ENCODE measurements at regions of chr15 and their contacts with region 1.

Region 1: GRCh38 chr15:49620658-49621368 is at the starts of genes DTWD1 and FAM227B:
- DNase-seq: peak; percentile 86 to 98
- H3K4me3 ChIP-seq: peak within 1 kb of the TSS; percentile 59 to 76
- H3K27ac ChIP-seq: peak within 1 kb of the TSS; percentile 84 to 90
- H3K4me1 ChIP-seq: peaks cover 0 to 11% of the 10 kb centered on the region in 2 donors
- H3K27me3 ChIP-seq: no peaks in the 10 kb centered on the region
- CTCF ChIP-seq: no peak
- total RNA-seq, gene DTWD1: 18.4 TPM
- total RNA-seq, gene FAM227B: not detected

Region 2: DNA sequence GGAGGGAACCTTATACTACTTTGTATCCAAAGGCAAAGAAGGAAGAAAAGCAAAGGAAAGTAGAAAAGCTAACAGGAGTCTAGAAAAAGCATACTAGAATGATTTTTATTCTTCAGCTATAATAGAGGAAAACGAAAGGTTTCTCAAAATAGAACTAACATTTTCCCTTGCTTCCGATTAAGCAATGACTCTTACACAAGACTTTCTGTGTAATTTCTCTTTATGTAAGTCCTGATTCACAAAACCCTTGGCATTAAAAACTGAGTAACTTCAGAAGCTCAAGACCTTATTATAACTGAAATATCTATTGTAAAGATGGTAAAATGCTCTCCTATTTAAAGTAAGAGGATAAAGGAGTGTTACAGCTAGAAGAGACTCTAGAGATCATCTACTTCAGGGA is 97.4 kb after region 1 on chr15:
- intact Hi-C with region 1: loop called (anchors 2 kb)
- DNase-seq: no peak
- H3K4me3 ChIP-seq: peak overlapping the region; percentile 3 to 31
- H3K27ac ChIP-seq: peak overlapping the region; percentile 73 to 83
- H3K4me1 ChIP-seq: peaks cover 0 to 17% of the 10 kb centered on the region in 2 donors
- H3K27me3 ChIP-seq: no peaks in the 10 kb centered on the region
- CTCF ChIP-seq: no peak

Region 3: DNA sequence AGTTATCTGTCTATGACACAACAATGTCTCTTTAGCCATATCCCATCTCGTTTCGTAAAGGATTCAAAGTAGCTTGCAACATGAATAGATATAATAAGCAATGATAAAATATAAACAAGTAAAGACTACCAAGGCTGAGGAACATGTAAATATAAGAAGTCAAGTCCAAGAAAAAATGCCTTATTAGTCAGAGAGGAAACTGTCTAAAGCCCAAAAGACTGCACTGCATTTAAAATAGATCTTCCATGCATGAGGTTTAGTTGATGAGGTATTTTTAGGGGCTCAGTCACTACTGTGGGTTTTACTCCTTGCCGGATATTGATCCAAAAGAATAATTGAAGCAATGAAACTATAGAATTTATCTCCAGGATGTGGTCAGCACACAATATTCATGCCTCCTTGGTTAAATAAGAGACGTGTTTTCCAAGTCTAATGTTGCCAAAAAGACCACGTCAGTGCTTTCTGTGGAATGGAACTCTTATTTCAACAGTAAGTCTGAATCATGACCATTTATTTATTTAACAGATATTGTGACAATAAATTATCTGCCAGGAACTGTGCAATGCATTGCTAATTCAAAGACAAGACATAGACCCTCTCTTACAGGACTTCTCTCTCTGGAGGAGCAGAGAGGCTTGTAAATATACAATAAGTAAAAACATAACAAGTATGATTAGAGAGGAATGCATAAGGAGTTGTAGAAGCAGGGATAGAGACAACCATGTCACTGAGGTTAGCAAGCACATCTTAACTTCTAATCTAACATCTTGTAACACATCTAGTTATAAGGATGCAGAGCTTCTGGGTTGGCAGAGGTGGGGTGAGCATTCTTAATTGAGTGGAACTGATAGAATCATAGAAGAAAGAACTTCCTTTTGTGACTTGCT is 227.4 kb after region 1 on chr15:
- intact Hi-C with region 1: loop called (anchors 5 kb)
- DNase-seq: no peak
- H3K4me3 ChIP-seq: no peak overlapping the region
- H3K27ac ChIP-seq: peak overlapping the region; percentile 35 to 82
- H3K4me1 ChIP-seq: peaks cover 9 to 10% of the 10 kb centered on the region in 2 donors
- H3K27me3 ChIP-seq: no peaks in the 10 kb centered on the region
- CTCF ChIP-seq: no peak

Region 4: DNA sequence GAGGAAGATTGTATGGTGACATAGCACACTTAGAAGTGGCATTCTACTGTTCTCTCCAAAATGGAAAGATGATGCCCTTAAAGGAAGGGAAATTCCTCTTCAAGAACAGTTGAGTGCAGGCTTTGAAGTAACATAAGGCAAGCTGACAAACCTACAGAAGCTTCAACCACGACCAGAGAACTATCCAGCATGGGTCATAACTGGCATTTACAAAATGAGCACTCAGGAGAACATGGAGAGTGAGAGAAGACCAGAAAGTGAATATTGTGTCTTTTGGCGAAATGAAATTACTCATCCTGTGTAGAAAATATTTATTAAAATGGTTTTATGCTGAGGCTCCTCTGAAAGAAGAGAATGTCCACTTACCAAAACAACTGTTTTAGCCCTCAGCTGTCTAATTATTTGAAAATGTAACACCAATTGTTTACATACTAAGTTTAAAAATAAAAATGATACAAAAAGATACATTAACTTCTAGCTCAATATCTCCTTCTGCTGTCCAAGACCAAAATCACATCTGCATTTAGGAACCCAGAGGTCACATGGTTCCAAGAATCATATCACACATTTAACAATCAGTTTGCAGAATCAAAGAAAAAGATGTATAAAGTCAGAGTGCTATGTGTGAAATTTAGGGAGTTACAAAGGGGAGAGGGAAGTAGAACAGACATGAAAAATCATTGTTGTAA is 281.3 kb after region 1 on chr15:
- intact Hi-C with region 1: loop called (anchors 2 kb)
- DNase-seq: no peak
- H3K4me3 ChIP-seq: peak overlapping the region in 1 of 2 donors; percentile 4
- H3K27ac ChIP-seq: peak overlapping the region; percentile 83 to 84
- H3K4me1 ChIP-seq: peaks cover 5 to 12% of the 10 kb centered on the region in 2 donors
- H3K27me3 ChIP-seq: no peaks in the 10 kb centered on the region
- CTCF ChIP-seq: peak in 2 of 3 experiments; percentile 11 to 12

Region 5: GRCh38 chr15:50003786-50004334 is 383.0 kb after region 1 on chr15:
- intact Hi-C with region 1: loop called (anchors 2 kb)
- DNase-seq: peak; percentile 31 to 83
- H3K4me3 ChIP-seq: no peak overlapping the region
- H3K27ac ChIP-seq: no peak overlapping the region
- H3K4me1 ChIP-seq: no peaks in the 10 kb centered on the region
- H3K27me3 ChIP-seq: no peaks in the 10 kb centered on the region
- CTCF ChIP-seq: peak; percentile 67 to 75 (median 71)

Region 6: DNA sequence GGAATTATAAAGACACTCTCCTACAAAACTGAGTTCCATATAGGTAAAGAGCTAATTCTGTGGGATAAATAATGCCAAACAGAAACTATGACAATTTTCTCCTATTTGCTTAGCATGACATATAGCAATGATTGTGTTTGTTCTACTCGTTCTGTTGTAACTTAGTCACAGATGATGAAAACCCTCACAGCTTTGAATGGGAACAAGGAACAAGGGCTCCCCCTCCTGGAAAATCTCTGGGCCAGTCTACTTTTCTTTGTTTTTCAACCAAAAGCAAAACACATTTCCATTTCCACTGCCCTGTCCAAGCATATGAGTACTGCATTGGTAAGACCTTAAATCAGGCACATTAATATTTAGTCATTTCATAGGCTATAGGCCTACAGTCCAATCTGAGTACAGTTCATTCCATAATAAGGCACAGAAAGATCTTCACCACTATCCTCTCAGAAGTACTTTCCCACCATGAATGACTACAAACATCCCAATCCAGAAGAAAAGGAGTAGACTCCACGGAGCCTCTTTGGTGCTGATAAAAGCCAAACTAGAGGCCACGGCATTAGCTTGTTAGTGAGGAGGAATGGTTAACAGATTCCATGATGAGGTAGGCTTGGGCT is 431.1 kb after region 1 on chr15:
- intact Hi-C with region 1: loop called (anchors 5 kb)
- DNase-seq: peak in 1 of 2 donors; percentile 76
- H3K4me3 ChIP-seq: no peak overlapping the region
- H3K27ac ChIP-seq: no peak overlapping the region
- H3K4me1 ChIP-seq: peaks cover 0 to 11% of the 10 kb centered on the region in 2 donors
- H3K27me3 ChIP-seq: no peaks in the 10 kb centered on the region
- CTCF ChIP-seq: peak; percentile 49 to 73 (median 59)